CD4-positive, alpha-beta T cell (primary cell): ENCODE measurements at regions of chr5 and their contacts with region 1.

Region 1: DNA sequence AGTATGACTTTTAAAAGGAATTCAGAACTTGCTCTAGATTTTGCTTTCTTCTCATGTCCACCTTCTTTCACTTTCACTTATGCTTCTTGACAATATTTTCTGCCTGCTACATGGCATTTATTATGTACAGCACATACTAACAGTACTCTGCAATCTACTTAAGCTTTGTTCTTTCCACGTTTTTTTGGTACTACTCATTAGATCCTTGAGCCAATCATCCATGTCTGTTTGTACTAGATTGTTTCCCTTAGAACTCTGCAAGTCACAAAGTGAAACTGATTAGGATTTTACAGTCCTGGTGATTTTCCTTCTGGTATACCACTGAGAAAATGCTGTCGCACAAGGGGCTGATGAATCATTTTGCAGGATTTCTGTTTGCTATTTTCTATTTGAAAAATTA is 78.3 kb downstream of the PARP8 start:
- DNase-seq: peak in 3 of 14 experiments; percentile 38 to 64 (median 46)
- ATAC-seq: peak; percentile 46
- H3K4me3 ChIP-seq: peak overlapping the region; percentile 46
- H3K4me3 Mint-ChIP-seq: peak overlapping the region; percentile 83
- H3K27ac ChIP-seq: peak overlapping the region; percentile 68 to 71
- H3K27ac Mint-ChIP-seq: peak overlapping the region; percentile 90
- H3K4me1 ChIP-seq: peaks cover 27% of the 10 kb centered on the region
- H3K4me1 Mint-ChIP-seq: peaks cover 77% of the 10 kb centered on the region
- H3K27me3 ChIP-seq: no peaks in the 10 kb centered on the region
- H3K27me3 Mint-ChIP-seq: no peaks in the 10 kb centered on the region
- CTCF ChIP-seq: no peak

Region 2: DNA sequence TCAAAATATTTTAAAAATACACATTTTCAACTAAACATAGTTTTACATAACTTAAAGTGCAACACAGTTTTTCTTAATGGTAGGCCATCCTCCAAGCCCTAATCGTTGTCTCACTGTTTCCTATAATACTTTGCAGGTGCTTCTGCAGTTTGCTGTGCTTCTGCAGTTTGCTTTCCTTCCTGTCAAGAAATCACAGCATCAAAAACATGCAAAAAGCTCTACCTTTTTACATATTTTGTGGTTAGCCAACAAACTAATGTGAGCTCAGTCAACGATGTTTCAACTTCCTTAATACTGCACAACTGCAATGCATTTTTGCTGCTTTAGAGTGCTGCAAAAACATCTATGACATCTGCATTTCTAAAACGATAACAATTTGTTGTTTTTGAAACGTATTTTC is 328.9 kb before region 1 on chr5:
- CTCF ChIA-PET with region 1: no interaction called
- POLR2A ChIA-PET with region 1: no interaction called
- intact Hi-C with region 1: loop called in 1 of 2 experiments (anchors 5 kb)
- DNase-seq: peak in 8 of 14 experiments; percentile 4 to 79 (median 31)
- ATAC-seq: peak; percentile 85
- H3K4me3 ChIP-seq: no peak overlapping the region
- H3K4me3 Mint-ChIP-seq: peak overlapping the region; percentile 76
- H3K27ac ChIP-seq: peak overlapping the region in 1 of 2 donors; percentile 64
- H3K27ac Mint-ChIP-seq: peak overlapping the region; percentile 92
- H3K4me1 ChIP-seq: peaks cover 36% of the 10 kb centered on the region
- H3K4me1 Mint-ChIP-seq: peaks cover 96% of the 10 kb centered on the region
- H3K27me3 ChIP-seq: no peaks in the 10 kb centered on the region
- H3K27me3 Mint-ChIP-seq: no peaks in the 10 kb centered on the region
- CTCF ChIP-seq: no peak

Region 3: GRCh38 chr5:50435168-50435567 is 309.6 kb before region 1 on chr5:
- CTCF ChIA-PET with region 1: interaction called, 5 read pairs
- POLR2A ChIA-PET with region 1: interaction called, 30 read pairs
- intact Hi-C with region 1: loop called in 1 of 2 experiments (anchors 5 kb)
- DNase-seq: peak in 1 of 14 experiments; percentile 25
- ATAC-seq: peak; percentile 13
- H3K4me3 ChIP-seq: no peak overlapping the region
- H3K4me3 Mint-ChIP-seq: peak overlapping the region; percentile 49
- H3K27ac ChIP-seq: no peak overlapping the region
- H3K27ac Mint-ChIP-seq: peak overlapping the region; percentile 70
- H3K4me1 ChIP-seq: peaks cover 50% of the 10 kb centered on the region
- H3K4me1 Mint-ChIP-seq: peaks cover 97% of the 10 kb centered on the region
- H3K27me3 ChIP-seq: no peaks in the 10 kb centered on the region
- H3K27me3 Mint-ChIP-seq: no peaks in the 10 kb centered on the region
- CTCF ChIP-seq: no peak

Region 4: DNA sequence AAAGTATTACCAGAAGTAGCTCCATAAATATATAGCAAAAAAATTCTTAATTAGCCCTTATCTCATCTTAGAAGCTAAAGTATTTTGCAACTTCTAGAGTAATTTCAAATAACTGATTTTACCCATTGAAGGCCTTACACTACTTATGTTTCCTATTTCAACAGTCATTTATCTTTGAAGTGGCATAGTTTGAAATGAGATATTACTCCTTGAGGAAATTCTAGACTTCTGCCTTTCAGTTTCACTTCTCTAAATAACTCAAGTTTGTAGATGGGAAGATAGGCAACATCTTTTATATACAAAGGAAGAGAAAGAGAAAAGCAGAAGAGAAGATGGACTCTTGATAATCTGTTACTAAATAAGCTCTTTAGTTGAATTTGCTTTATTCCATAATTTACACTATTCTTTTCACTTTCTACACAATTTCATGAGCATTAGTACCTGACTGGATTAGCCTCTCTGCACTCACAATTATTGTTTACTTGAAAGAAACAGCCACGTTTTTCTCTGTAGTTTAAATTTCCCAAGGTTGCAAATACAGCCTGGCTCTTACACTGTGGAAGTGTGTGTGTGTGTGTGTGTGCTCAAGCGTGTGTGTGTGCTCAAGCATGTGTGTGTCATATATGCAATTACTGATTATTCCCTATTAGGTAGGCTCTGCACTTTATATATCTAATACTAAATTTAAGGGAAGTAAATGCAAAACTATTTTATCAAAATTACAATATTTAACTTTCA is 243.1 kb before region 1 on chr5:
- CTCF ChIA-PET with region 1: no interaction called
- POLR2A ChIA-PET with region 1: no interaction called
- intact Hi-C with region 1: no loop called
- DNase-seq: peak in 4 of 14 experiments; percentile 5 to 57 (median 42)
- ATAC-seq: no peak
- H3K4me3 ChIP-seq: no peak overlapping the region
- H3K4me3 Mint-ChIP-seq: peak overlapping the region; percentile 63
- H3K27ac ChIP-seq: peak overlapping the region in 1 of 2 donors; percentile 19
- H3K27ac Mint-ChIP-seq: peak overlapping the region; percentile 67
- H3K4me1 ChIP-seq: peaks cover 3% of the 10 kb centered on the region
- H3K4me1 Mint-ChIP-seq: peaks cover 26% of the 10 kb centered on the region
- H3K27me3 ChIP-seq: no peaks in the 10 kb centered on the region
- H3K27me3 Mint-ChIP-seq: no peaks in the 10 kb centered on the region
- CTCF ChIP-seq: no peak

Region 5: GRCh38 chr5:50711273-50711672 is 33.5 kb before region 1 on chr5:
- CTCF ChIA-PET with region 1: interaction called, 3 read pairs
- POLR2A ChIA-PET with region 1: interaction called, 10 read pairs
- intact Hi-C with region 1: loop called in 1 of 2 experiments (anchors 2 kb)
- DNase-seq: peak; percentile 21 to 90 (median 39)
- ATAC-seq: peak; percentile 93
- H3K4me3 ChIP-seq: peak overlapping the region; percentile 34
- H3K4me3 Mint-ChIP-seq: peak overlapping the region; percentile 85
- H3K27ac ChIP-seq: peak overlapping the region; percentile 71 to 74
- H3K27ac Mint-ChIP-seq: peak overlapping the region; percentile 92
- H3K4me1 ChIP-seq: peaks cover 31% of the 10 kb centered on the region
- H3K4me1 Mint-ChIP-seq: peaks cover 91% of the 10 kb centered on the region
- H3K27me3 ChIP-seq: no peaks in the 10 kb centered on the region
- H3K27me3 Mint-ChIP-seq: no peaks in the 10 kb centered on the region
- CTCF ChIP-seq: no peak

Region 6: DNA sequence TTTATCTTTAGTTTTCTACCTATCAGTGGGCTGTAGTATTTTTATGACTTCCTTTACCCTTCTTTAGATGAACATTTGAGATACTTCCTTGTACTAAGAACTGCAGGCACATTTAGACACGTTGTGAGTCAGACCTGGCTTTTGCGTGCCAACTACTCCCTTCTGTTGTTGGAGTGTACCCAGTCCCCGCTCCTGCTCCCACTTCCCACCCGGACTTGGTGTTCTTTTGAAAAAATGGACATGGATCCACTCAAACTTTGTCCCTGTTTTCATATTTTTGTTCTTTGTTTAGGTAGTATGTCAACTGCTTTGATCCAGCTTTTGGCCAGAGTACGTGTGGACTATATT is 17.7 kb before region 1 on chr5:
- CTCF ChIA-PET with region 1: interaction called, 3 read pairs
- POLR2A ChIA-PET with region 1: interaction called, 6 read pairs
- intact Hi-C with region 1: loop called in 1 of 2 experiments (anchors 1 kb)
- DNase-seq: peak in 4 of 14 experiments; percentile 27 to 47 (median 36)
- ATAC-seq: peak; percentile 60
- H3K4me3 ChIP-seq: no peak overlapping the region
- H3K4me3 Mint-ChIP-seq: peak overlapping the region; percentile 52
- H3K27ac ChIP-seq: peak overlapping the region in 1 of 2 donors; percentile 14
- H3K27ac Mint-ChIP-seq: peak overlapping the region; percentile 70
- H3K4me1 ChIP-seq: peaks cover 17% of the 10 kb centered on the region
- H3K4me1 Mint-ChIP-seq: peaks cover 79% of the 10 kb centered on the region
- H3K27me3 ChIP-seq: no peaks in the 10 kb centered on the region
- H3K27me3 Mint-ChIP-seq: no peaks in the 10 kb centered on the region
- CTCF ChIP-seq: no peak

Region 7: GRCh38 chr5:51001227-51001923 is 256.6 kb after region 1 on chr5:
- CTCF ChIA-PET with region 1: no interaction called
- POLR2A ChIA-PET with region 1: no interaction called
- intact Hi-C with region 1: no loop called
- DNase-seq: no peak
- ATAC-seq: no peak
- H3K4me3 ChIP-seq: no peak overlapping the region
- H3K4me3 Mint-ChIP-seq: no peak overlapping the region
- H3K27ac ChIP-seq: no peak overlapping the region
- H3K27ac Mint-ChIP-seq: no peak overlapping the region
- H3K4me1 ChIP-seq: no peaks in the 10 kb centered on the region
- H3K4me1 Mint-ChIP-seq: no peaks in the 10 kb centered on the region
- H3K27me3 ChIP-seq: no peaks in the 10 kb centered on the region
- H3K27me3 Mint-ChIP-seq: peaks cover 21% of the 10 kb centered on the region
- CTCF ChIP-seq: no peak